ENCODE measurements at regions of chr10 and their contacts with region 1.

Region 1: DNA sequence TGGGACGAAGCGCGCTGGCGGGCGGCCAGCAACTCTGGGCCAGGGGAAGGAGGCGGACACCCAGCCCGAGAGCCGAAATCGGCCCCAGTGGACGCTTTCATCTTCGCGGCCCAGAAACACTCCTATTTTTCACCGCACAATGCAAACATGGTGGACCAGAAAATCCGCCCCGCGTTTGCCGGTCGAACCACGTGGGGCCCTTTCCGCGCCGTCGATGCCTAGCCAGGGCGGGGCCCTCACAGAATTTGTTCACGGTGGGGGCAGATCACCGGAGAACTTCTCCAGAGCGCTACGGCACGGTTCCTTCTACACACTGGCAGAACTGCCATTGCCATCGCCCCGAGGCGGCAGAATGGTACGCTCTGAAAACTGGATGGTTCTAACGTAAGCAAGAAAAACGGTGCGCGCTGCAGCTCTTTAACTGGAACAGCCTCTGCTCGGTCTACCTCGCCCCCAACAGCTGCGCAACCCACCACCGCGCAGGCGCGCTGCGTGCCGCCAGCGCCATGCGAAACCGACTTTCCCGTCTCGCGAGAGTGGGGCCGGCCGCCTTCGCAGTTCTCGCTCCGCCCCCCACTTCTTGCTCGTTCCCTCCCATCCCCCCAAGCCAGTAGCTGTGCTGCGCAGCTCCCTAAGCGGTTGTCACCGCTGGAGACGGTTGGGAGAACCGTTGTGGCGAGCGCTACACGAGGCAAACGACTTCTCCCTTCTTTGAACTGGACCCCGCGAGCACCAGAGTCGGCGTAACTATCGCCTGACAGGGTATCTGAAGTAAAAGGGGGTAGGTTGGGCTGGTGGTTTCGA is at the start of gene HNRNPH3:
- DNase-seq: peak; percentile 99 to 100
- H3K4me3 ChIP-seq: peak within 1 kb of the TSS; percentile 68
- H3K4me3 Mint-ChIP-seq: peak within 1 kb of the TSS; percentile 87
- H3K27ac Mint-ChIP-seq: peak within 1 kb of the TSS; percentile 100
- H3K4me1 ChIP-seq: peaks cover 21% of the 10 kb centered on the region
- H3K4me1 Mint-ChIP-seq: peaks cover 45% of the 10 kb centered on the region
- H3K27me3 ChIP-seq: no peaks in the 10 kb centered on the region
- H3K27me3 Mint-ChIP-seq: no peaks in the 10 kb centered on the region
- CTCF ChIP-seq: peak in 1 of 2 experiments; percentile 1
- total RNA-seq, gene HNRNPH3: 262 and 283 TPM in 2 replicates

Region 2: DNA sequence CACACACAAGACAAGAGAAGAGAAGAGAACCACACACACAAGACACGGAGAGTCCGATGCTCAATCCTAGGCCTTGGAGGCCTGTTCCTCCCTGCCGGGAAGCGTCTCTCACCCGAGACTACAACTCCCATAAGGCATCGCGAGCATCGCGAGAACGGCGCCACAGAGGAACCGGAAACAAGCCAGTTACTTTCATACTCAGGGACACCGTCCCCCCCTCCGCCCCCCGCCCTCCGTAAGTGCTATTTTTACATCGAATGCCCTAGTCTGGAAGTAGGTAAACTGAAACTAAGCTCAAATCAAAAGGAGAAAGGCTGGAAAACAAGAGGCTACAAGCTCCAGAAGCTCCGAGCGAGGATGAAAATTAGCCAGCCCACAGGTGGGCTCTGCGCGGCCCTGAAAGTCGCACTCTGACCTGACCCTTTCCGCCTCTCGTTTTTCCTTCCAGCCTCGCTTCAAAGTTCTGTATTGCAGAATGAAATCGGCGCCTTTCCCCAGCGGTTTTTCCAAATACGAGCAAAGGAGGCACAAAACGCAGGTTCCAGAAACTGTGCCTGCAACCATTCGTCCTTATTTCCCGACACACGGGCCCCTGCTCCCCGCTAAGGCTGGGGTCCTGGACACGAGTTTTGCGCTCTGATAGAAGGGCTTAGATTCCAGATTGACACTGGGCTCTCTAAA is 482.2 kb before region 1 on chr10:
- CTCF ChIA-PET with region 1: interaction called, 11 read pairs
- POLR2A ChIA-PET with region 1: interaction called, 5 read pairs
- intact Hi-C with region 1: loop called (anchors 10 kb)
- DNase-seq: peak; percentile 98
- H3K4me3 ChIP-seq: peak overlapping the region; percentile 51
- H3K4me3 Mint-ChIP-seq: peak overlapping the region; percentile 94
- H3K27ac Mint-ChIP-seq: peak overlapping the region; percentile 95
- H3K4me1 ChIP-seq: no peaks in the 10 kb centered on the region
- H3K4me1 Mint-ChIP-seq: peaks cover 6% of the 10 kb centered on the region
- H3K27me3 ChIP-seq: no peaks in the 10 kb centered on the region
- H3K27me3 Mint-ChIP-seq: no peaks in the 10 kb centered on the region
- CTCF ChIP-seq: no peak

Region 3: DNA sequence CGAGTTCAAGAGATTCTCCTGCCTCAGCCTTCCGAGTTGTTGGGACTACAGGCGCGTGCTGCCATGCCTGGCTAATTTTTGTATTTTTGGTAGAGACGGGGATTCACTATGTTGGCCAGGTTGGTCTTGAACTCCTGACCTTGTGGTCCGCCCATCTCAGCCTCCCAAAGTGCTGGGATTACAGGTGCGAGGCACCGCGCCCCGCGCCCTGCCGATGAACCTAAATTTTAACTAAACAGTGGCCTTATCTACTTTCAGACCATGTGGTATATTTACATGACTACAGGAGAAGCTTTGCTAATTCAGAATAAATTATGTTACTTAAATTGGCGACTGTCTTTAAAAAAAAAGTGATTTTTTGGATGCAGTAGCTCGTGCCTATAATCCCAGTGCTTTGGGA is 438.0 kb before region 1 on chr10:
- CTCF ChIA-PET with region 1: no interaction called
- POLR2A ChIA-PET with region 1: interaction called, 11 read pairs
- intact Hi-C with region 1: loop called (anchors 10 kb)
- DNase-seq: no peak
- H3K4me3 ChIP-seq: no peak overlapping the region
- H3K4me3 Mint-ChIP-seq: no peak overlapping the region
- H3K27ac Mint-ChIP-seq: no peak overlapping the region
- H3K4me1 ChIP-seq: no peaks in the 10 kb centered on the region
- H3K4me1 Mint-ChIP-seq: no peaks in the 10 kb centered on the region
- H3K27me3 ChIP-seq: no peaks in the 10 kb centered on the region
- H3K27me3 Mint-ChIP-seq: no peaks in the 10 kb centered on the region
- CTCF ChIP-seq: no peak

Region 4: DNA sequence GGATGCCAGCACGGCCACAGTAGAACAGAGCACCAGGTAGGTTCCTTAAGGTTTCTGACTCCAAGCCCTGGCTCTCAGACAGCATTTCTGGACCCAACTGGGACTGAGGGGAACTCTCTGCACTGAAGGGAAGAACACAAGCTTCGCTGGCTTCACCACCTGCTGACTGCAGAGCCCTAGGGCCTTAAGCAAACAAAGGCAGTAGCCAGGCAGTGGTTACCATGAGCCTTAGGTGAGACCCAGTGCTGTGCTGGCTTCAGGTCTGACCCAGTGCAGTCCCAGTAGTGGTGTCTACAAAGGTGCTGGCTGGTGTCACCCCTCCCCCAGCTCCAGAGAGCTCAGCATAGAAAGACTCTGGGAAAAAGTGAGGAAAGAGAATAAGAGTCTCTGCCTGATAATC is 387.7 kb before region 1 on chr10:
- CTCF ChIA-PET with region 1: no interaction called
- POLR2A ChIA-PET with region 1: no interaction called
- intact Hi-C with region 1: no loop called
- DNase-seq: no peak
- H3K4me3 ChIP-seq: no peak overlapping the region
- H3K4me3 Mint-ChIP-seq: no peak overlapping the region
- H3K27ac Mint-ChIP-seq: no peak overlapping the region
- H3K4me1 ChIP-seq: no peaks in the 10 kb centered on the region
- H3K4me1 Mint-ChIP-seq: no peaks in the 10 kb centered on the region
- H3K27me3 ChIP-seq: no peaks in the 10 kb centered on the region
- H3K27me3 Mint-ChIP-seq: no peaks in the 10 kb centered on the region
- CTCF ChIP-seq: no peak

Region 5: GRCh38 chr10:68074775-68075549 is 256.7 kb before region 1 on chr10 and contains the start of gene HERC4:
- CTCF ChIA-PET with region 1: no interaction called
- POLR2A ChIA-PET with region 1: interaction called, 5 read pairs
- intact Hi-C with region 1: loop called (anchors 1 kb)
- DNase-seq: peak; percentile 98
- H3K4me3 ChIP-seq: peak within 1 kb of the TSS; percentile 91
- H3K4me3 Mint-ChIP-seq: peak within 1 kb of the TSS; percentile 97
- H3K27ac Mint-ChIP-seq: peak within 1 kb of the TSS; percentile 94
- H3K4me1 ChIP-seq: peaks cover 18% of the 10 kb centered on the region
- H3K4me1 Mint-ChIP-seq: peaks cover 18% of the 10 kb centered on the region
- H3K27me3 ChIP-seq: no peaks in the 10 kb centered on the region
- H3K27me3 Mint-ChIP-seq: no peaks in the 10 kb centered on the region
- CTCF ChIP-seq: no peak
- total RNA-seq, gene HERC4: 59.4 and 65.2 TPM in 2 replicates

Region 6: DNA sequence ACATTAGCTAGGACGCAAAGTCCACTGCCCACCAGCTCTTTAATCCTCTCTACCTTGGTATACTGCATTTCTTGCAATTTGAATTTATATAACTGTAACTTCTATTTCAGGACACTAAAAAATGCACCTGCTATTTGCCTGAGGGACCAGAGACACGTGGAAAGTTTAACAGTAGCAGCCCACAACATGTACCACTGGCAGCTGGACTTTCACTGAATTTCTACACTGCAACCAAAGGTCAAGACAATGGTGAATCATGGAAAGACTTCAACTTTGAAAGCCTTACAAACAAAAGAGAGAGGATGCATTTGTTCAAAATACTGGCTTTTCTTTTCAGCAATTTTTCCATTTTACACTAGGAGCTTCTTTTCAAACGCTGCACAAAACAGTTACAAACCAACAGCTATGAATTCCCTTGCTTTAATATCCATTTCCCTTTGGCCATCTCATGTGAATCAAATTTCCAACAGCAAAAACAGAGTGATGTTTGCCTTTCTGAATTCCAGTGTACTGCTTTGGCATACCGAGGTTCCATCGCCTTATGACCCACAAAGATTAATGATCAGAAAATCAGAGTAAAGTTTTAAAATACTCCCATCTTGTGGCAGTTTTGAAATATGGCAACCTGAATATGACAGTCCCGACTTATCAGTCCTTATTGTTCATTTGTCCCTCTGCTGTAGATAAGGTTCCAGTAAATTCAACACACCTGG is 29.7 kb before region 1 on chr10:
- CTCF ChIA-PET with region 1: interaction called, 9 read pairs
- POLR2A ChIA-PET with region 1: interaction called, 3 read pairs
- intact Hi-C with region 1: loop called (anchors 1 kb)
- DNase-seq: peak in 1 of 2 experiments; percentile 66
- H3K4me3 ChIP-seq: no peak overlapping the region
- H3K4me3 Mint-ChIP-seq: no peak overlapping the region
- H3K27ac Mint-ChIP-seq: no peak overlapping the region
- H3K4me1 ChIP-seq: peaks cover 20% of the 10 kb centered on the region
- H3K4me1 Mint-ChIP-seq: peaks cover 21% of the 10 kb centered on the region
- H3K27me3 ChIP-seq: no peaks in the 10 kb centered on the region
- H3K27me3 Mint-ChIP-seq: no peaks in the 10 kb centered on the region
- CTCF ChIP-seq: peak; percentile 65 to 83

Region 7: GRCh38 chr10:68348265-68348741 is 16.6 kb after region 1 on chr10:
- CTCF ChIA-PET with region 1: interaction called, 5 read pairs
- POLR2A ChIA-PET with region 1: interaction called, 11 read pairs
- intact Hi-C with region 1: no loop called
- DNase-seq: peak; percentile 73 to 76
- H3K4me3 ChIP-seq: no peak overlapping the region
- H3K4me3 Mint-ChIP-seq: no peak overlapping the region
- H3K27ac Mint-ChIP-seq: no peak overlapping the region
- H3K4me1 ChIP-seq: no peaks in the 10 kb centered on the region
- H3K4me1 Mint-ChIP-seq: no peaks in the 10 kb centered on the region
- H3K27me3 ChIP-seq: no peaks in the 10 kb centered on the region
- H3K27me3 Mint-ChIP-seq: no peaks in the 10 kb centered on the region
- CTCF ChIP-seq: peak; percentile 92 to 97

Region 8: DNA sequence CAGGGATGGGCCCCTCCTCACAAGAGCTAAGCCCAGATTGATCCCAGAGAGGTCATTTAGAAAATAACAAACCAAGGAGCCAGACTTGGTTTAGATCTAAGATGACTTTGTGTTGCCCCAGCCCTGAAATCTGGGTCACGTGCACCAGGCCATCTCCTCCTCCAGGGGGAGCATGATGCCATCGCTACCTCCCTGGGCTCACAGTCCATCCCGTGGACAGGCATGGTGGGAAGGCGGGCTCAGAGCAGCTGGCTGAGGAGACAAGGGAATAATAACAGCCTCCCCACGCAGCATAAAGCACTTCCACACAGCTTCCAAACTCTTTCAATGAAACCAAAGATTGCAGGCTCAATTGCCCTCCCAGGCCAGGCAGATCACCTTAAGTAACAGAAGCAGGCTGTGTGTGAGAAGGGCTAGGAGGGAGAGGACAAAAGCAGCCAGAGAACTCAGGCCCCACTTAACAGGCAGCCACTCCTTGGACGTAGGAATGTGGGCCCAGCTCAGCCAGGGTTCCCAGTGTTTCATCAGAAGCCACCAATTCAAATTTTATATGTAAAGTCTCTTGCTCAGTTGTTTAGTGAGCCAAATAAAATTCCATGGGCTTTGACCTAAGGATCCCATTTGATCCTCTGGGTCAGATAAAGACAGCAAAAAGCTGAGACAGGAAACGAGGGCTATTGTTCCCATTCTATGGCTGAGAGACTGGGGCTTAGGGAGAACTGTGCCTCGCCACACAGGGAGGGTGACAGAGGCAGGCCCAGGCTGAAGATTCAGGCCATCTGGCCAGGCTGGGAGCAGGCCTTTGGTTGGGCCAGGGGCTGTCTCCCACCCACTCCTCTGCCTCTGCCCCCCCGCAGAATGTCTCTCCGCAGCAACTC is 1570.2 kb after region 1 on chr10:
- CTCF ChIA-PET with region 1: no interaction called
- POLR2A ChIA-PET with region 1: no interaction called
- intact Hi-C with region 1: no loop called
- DNase-seq: peak; percentile 85 to 88
- H3K4me3 ChIP-seq: no peak overlapping the region
- H3K4me3 Mint-ChIP-seq: no peak overlapping the region
- H3K27ac Mint-ChIP-seq: no peak overlapping the region
- H3K4me1 ChIP-seq: peaks cover 37% of the 10 kb centered on the region
- H3K4me1 Mint-ChIP-seq: peaks cover 29% of the 10 kb centered on the region
- H3K27me3 ChIP-seq: no peaks in the 10 kb centered on the region
- H3K27me3 Mint-ChIP-seq: no peaks in the 10 kb centered on the region
- CTCF ChIP-seq: peak; percentile 91 to 94